ENCODE measurements at regions of chr15 and their contacts with region 1.

Region 1: DNA sequence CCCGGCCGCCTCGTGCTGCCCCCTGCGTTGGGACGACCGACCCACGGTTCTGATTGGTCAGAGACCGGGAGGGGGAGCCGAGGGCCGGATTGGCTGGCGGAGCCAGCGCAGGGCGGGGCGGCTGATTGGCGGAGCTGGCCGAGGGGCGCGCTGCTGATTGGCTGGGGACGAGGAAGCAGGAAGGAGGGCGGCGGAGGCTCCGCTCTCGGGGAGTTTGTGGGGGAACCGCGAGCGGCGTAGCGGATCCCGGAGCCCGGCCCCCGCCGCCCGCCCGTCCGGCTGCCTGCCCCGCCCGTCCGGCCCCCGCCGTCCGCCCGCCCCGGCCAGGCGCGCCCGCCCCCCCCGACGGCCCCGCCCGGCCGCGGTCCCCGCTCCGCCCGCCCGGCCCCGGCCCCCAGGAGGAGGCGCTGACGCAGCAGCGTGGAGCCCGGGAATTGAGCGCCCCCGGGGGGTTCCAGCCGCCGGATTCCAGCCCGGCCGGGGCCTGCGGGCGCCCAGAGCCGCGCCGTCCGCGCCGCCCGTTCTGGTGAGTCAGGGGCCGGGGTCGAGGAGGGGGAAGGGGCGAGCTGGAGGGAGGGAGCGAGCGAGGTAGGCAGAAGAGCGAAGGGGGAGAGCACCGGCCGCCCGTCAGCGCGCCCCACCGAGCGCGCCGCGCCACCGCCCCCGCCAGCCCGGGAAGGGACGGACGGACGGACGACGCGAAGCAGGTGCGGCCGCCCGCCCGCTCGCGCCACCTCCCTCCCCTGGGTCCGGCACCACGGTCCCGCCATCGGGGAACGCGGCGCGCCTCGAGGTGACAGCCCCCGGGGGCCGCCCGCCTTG is at the start of gene BAHD1:
- DNase-seq: peak; percentile 100
- H3K4me3 ChIP-seq: peak within 1 kb of the TSS; percentile 75 to 77
- H3K27ac ChIP-seq: peak within 1 kb of the TSS in 1 of 2 experiments; percentile 72; a peak in 2 of 4 replicates
- H3K4me1 ChIP-seq: peaks cover 12 to 38% of the 10 kb centered on the region in 2 experiments; a peak in 3 of 4 replicates
- H3K27me3 ChIP-seq: no peaks in the 10 kb centered on the region; the same call in 1 of the 2 replicates
- CTCF ChIP-seq: peak; percentile 17; the same call in 1 of the 2 replicates
- EP300 ChIP-seq: no peak
- RAD21 ChIP-seq: no peak
- polyA plus RNA-seq, gene BAHD1: 4.7 and 5.5 TPM in 2 replicates

Region 2: GRCh38 chr15:40454904-40455391 is 14.0 kb after region 1 on chr15:
- CTCF ChIA-PET with region 1: interaction called, 11 read pairs
- POLR2A ChIA-PET with region 1: interaction called, 3 read pairs
- DNase-seq: no peak
- H3K4me3 ChIP-seq: no peak overlapping the region
- H3K27ac ChIP-seq: peak overlapping the region in 1 of 2 experiments; percentile 23; a peak in 2 of 4 replicates
- H3K4me1 ChIP-seq: peaks cover 22 to 23% of the 10 kb centered on the region in 2 experiments; a peak in 3 of 4 replicates
- H3K27me3 ChIP-seq: no peaks in the 10 kb centered on the region
- CTCF ChIP-seq: no peak
- EP300 ChIP-seq: no peak
- RAD21 ChIP-seq: no peak

Region 3: GRCh38 chr15:40470423-40471104 is 29.6 kb after region 1 on chr15 and contains the start of gene CHST14:
- CTCF ChIA-PET with region 1: interaction called, 11 read pairs
- POLR2A ChIA-PET with region 1: interaction called, 3 read pairs
- DNase-seq: peak; percentile 97
- H3K4me3 ChIP-seq: peak within 1 kb of the TSS; percentile 83 to 86
- H3K27ac ChIP-seq: peak within 1 kb of the TSS; percentile 65 to 92
- H3K4me1 ChIP-seq: peaks cover 15 to 27% of the 10 kb centered on the region in 2 experiments; a peak in 3 of 4 replicates
- H3K27me3 ChIP-seq: no peaks in the 10 kb centered on the region
- CTCF ChIP-seq: no peak
- EP300 ChIP-seq: no peak
- RAD21 ChIP-seq: 0 out of 2 replicates have a peak, but pooled peaks have one; percentile 13
- polyA plus RNA-seq, gene CHST14: 34.2 and 43.2 TPM in 2 replicates